Activated CD4-positive, alpha-beta T cell treated with anti-CD3 and anti-CD28 coated beads, Interleukin-2, amount 10 ng/mL, durations not matched to agents 24 days and 14 days (primary cell): ENCODE measurements at regions of chr21 and their contacts with region 1.

Region 1: GRCh38 chr21:34582506-34583150 is 32.3 kb downstream of the RCAN1 start:
- DNase-seq: no peak
- H3K4me3 Mint-ChIP-seq: no peak overlapping the region
- H3K27ac Mint-ChIP-seq: no peak overlapping the region
- H3K4me1 Mint-ChIP-seq: peaks cover 11% of the 10 kb centered on the region
- H3K27me3 Mint-ChIP-seq: no peaks in the 10 kb centered on the region

Region 2: GRCh38 chr21:34517491-34518245 is 65.0 kb before region 1 on chr21:
- intact Hi-C with region 1: loop called (anchors 2 kb)
- DNase-seq: peak; percentile 72
- H3K4me3 Mint-ChIP-seq: peak overlapping the region; percentile 7
- H3K27ac Mint-ChIP-seq: peak overlapping the region; percentile 30
- H3K4me1 Mint-ChIP-seq: peaks cover 22% of the 10 kb centered on the region
- H3K27me3 Mint-ChIP-seq: no peaks in the 10 kb centered on the region

Region 3: GRCh38 chr21:34595457-34595856 is 12.8 kb after region 1 on chr21:
- intact Hi-C with region 1: no loop called
- DNase-seq: no peak
- H3K4me3 Mint-ChIP-seq: no peak overlapping the region
- H3K27ac Mint-ChIP-seq: no peak overlapping the region
- H3K4me1 Mint-ChIP-seq: no peaks in the 10 kb centered on the region
- H3K27me3 Mint-ChIP-seq: peaks cover 2% of the 10 kb centered on the region